ENCODE measurements at regions of chr10 and their contacts with region 1.

Region 1: DNA sequence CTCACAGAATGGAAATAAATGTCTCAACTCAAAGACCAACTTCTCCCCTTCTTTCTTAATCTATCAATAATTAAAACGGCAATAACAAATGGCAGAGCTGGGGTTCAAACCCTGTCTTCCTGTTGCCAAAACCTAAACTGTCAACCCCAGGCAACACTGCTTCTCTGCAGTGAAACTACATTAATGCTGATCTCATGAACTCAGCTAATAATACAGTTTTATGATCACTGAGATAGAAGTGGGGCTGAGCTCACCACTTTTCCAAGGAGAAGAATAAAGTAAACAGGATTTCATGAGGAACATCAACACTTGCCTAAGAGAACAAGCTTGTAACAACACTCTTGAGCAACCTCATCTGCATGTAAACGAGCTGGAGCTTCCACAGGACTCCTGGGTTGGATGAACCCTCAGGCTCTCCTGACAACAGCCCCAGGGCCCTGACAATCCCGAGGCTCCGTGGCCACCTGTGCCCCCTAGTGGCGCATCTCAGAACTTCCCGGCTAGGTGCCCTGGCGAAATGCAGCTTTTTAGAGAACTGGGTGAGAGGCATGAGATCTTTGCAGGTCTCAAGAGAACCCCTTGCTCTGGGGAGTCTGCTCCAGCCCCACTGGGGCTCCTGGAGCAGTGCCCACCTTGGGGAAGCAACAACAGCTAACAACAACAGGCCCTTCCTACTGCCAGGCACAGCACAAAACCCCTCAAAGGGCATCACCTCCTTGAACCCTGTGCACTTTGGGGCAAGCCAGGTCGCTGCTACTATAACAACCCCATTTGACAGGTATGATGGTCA is 169.3 kb downstream of the SH3PXD2A start:
- DNase-seq: peak; percentile 60 to 78 (median 67)
- H3K4me3 ChIP-seq: no peak overlapping the region
- H3K27ac ChIP-seq: no peak overlapping the region
- H3K4me1 ChIP-seq: no peaks in the 10 kb centered on the region
- H3K27me3 ChIP-seq: no peaks in the 10 kb centered on the region

Region 2: DNA sequence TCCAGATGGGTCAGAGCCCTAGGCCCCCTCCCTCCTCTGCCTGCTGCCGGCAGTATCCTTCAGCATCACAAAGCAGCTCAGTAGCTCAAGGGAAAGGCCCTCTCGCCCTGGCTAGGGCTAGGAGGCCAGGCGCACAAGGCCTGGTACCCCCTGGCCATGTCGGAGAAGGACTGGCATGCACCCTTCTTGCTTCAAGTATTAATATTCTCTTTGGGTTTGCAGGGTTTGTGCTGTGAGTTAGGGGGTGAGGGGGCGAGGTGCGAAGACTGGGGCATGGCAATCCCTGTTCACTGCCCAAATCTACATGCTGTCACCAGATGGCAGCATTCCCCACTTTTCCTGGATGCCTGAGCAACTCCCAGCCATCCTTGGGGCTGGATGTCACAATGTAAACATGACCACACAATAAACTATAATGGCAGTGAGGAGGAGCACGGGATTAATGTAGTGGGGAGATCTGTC is 87.4 kb before region 1 on chr10:
- CTCF ChIA-PET with region 1: interaction called, 136 read pairs
- POLR2A ChIA-PET with region 1: no interaction called
- DNase-seq: peak; percentile 40 to 51 (median 43)
- H3K4me3 ChIP-seq: no peak overlapping the region
- H3K27ac ChIP-seq: no peak overlapping the region
- H3K4me1 ChIP-seq: no peaks in the 10 kb centered on the region
- H3K27me3 ChIP-seq: no peaks in the 10 kb centered on the region

Region 3: GRCh38 chr10:103618575-103619423 is 67.3 kb before region 1 on chr10:
- CTCF ChIA-PET with region 1: interaction called, 13 read pairs
- POLR2A ChIA-PET with region 1: no interaction called
- DNase-seq: peak; percentile 57 to 90 (median 82)
- H3K4me3 ChIP-seq: no peak overlapping the region
- H3K27ac ChIP-seq: peak overlapping the region in 1 of 2 experiments; percentile 53
- H3K4me1 ChIP-seq: peaks cover 0 to 7% (median 1%) of the 10 kb centered on the region in 4 experiments
- H3K27me3 ChIP-seq: no peaks in the 10 kb centered on the region

Region 4: DNA sequence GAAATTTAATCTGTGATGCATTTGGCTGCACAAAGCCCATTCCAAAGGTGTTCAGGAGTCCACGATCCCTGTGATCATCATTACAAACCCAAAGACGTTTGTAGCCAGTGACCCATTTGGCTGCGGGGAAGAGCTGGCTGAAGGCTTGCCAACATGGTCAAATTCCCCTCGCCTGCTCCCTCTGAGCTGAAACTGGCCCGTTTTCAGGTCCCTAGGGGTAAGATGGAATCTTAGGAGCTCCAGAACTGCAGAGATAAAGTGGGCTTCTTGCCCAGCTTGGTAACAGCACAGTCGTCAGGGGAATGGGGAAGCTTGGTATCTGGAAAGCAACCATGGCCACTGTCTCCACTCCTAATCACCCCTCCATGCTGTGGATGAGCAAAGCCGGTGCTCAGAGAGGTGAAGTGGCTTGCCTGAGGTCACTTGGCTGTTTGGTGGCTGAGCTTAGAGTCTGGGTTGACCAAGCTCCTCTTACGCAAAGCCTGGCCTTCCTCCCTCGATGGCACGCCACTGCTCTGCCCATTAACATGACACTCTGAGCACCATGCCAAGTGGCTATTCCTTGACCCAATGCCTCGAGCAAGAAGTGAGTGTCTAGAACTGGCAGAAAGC is 37.0 kb before region 1 on chr10:
- CTCF ChIA-PET with region 1: interaction called, 11 read pairs
- POLR2A ChIA-PET with region 1: no interaction called
- DNase-seq: no peak
- H3K4me3 ChIP-seq: no peak overlapping the region
- H3K27ac ChIP-seq: no peak overlapping the region
- H3K4me1 ChIP-seq: peaks cover 0 to 18% (median 14%) of the 10 kb centered on the region in 4 experiments
- H3K27me3 ChIP-seq: no peaks in the 10 kb centered on the region

Region 5: DNA sequence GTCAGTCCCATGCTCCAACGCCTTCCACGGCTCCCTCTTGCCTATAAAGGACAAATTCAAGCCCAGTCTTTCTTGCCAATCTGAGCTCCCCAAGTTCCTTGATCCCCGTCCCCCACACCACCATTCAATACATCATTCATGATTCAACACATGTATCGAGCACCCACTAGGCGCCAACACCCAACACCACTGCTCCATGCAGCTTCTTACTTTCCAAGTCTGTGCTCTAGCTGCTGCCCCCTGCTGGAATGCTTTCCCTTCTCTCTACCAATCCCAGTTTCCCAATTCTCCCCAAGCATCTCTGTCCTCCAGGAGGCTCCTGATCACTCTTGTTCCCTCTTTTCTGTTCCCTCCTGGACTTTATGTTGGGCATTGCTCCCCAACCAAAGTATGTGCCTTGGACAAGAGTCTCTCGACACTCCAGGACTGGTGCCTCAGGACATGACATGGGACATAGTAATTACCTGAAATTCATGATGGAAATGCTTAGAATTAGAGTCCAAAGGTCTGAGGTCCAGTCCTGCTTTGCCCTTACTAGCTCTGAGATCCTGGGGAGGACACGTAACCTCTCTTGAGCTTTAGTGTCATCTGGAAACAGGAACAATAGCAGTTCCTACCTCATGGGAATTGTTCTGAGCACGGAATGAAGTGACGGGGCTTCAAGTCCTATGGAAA is 19.9 kb before region 1 on chr10:
- CTCF ChIA-PET with region 1: interaction called, 40 read pairs
- POLR2A ChIA-PET with region 1: interaction called, 3 read pairs
- DNase-seq: peak in 1 of 3 donors; percentile 12
- H3K4me3 ChIP-seq: no peak overlapping the region
- H3K27ac ChIP-seq: no peak overlapping the region
- H3K4me1 ChIP-seq: peaks cover 0 to 25% (median 12%) of the 10 kb centered on the region in 4 experiments
- H3K27me3 ChIP-seq: no peaks in the 10 kb centered on the region

Region 6: GRCh38 chr10:104844073-104844472 is 1158.0 kb after region 1 on chr10:
- CTCF ChIA-PET with region 1: no interaction called
- POLR2A ChIA-PET with region 1: no interaction called
- DNase-seq: no peak
- H3K4me3 ChIP-seq: no peak overlapping the region
- H3K27ac ChIP-seq: no peak overlapping the region
- H3K4me1 ChIP-seq: no peaks in the 10 kb centered on the region
- H3K27me3 ChIP-seq: no peaks in the 10 kb centered on the region